Naive thymus-derived CD8-positive, alpha-beta T cell (primary cell): ENCODE measurements at regions of chr2 and their contacts with region 1.

Region 1: GRCh38 chr2:23926750-23927571 is at the start of gene ATAD2B:
- DNase-seq: peak; percentile 91 to 97 (median 94)
- ATAC-seq: peak; percentile 82
- H3K4me3 Mint-ChIP-seq: peak within 1 kb of the TSS; percentile 94 to 99 (median 98)
- H3K27ac Mint-ChIP-seq: peak within 1 kb of the TSS; percentile 93 to 100 (median 100)
- H3K4me1 Mint-ChIP-seq: peaks cover 24 to 59% (median 55%) of the 10 kb centered on the region in 4 donors
- H3K27me3 Mint-ChIP-seq: no peaks in the 10 kb centered on the region
- polyA plus RNA-seq, gene ATAD2B: 7.2 to 11.4 (median 7.5) TPM

Region 2: DNA sequence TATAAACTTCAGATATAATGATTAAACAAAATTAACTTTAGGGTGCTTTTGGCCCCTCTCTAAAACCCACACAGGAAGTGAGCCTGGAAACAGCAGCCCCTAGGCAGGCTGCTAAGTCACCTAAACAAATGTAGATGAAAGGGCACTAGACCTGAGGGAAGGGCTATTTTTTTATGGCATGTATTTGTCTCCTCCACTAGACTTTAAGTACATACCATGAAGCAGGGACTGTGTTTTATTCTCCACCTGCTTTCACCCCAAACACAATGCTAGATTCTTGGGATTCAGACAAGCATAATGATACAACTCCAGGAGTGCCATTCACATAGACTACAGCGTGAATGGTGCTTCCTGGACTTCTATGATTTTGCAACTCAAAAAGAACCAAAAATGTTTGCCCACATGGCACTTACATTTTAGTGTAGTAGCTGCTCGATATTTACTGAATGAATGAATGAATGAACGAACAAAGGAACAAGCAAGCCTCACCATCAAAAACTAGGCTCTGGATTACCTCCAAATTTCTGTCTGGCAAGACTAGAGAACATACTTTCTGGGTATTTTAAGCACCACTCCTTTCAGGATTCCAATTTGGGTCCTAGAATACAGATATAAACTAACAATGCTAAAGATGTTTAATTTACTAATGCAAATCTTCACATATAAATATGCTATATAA is 10.1 kb before region 1 on chr2:
- POLR2A ChIA-PET with region 1: interaction called, 16 read pairs
- DNase-seq: peak in 4 of 10 donors; percentile 6 to 32 (median 24)
- ATAC-seq: peak; percentile 80 to 88
- H3K4me3 Mint-ChIP-seq: peak overlapping the region in 9 of 10 donors; percentile 21 to 66 (median 59)
- H3K27ac Mint-ChIP-seq: peak overlapping the region in 9 of 10 donors; percentile 28 to 82 (median 57)
- H3K4me1 Mint-ChIP-seq: peaks cover 25 to 77% (median 63%) of the 10 kb centered on the region in 4 donors
- H3K27me3 Mint-ChIP-seq: no peaks in the 10 kb centered on the region

Region 3: GRCh38 chr2:23939987-23940717 is 13.2 kb after region 1 on chr2 and contains the start of gene UBXN2A:
- POLR2A ChIA-PET with region 1: interaction called, 108 read pairs
- DNase-seq: peak; percentile 62 to 81 (median 77)
- ATAC-seq: peak; percentile 84
- H3K4me3 Mint-ChIP-seq: peak within 1 kb of the TSS; percentile 79 to 97 (median 94)
- H3K27ac Mint-ChIP-seq: peak within 1 kb of the TSS; percentile 73 to 95 (median 93)
- H3K4me1 Mint-ChIP-seq: peaks cover 19 to 39% (median 30%) of the 10 kb centered on the region in 4 donors
- H3K27me3 Mint-ChIP-seq: peaks cover 0 to 6% (median 0%) of the 10 kb centered on the region in 5 donors
- polyA plus RNA-seq, gene UBXN2A: 13.1 to 13.6 (median 13.6) TPM

Region 4: DNA sequence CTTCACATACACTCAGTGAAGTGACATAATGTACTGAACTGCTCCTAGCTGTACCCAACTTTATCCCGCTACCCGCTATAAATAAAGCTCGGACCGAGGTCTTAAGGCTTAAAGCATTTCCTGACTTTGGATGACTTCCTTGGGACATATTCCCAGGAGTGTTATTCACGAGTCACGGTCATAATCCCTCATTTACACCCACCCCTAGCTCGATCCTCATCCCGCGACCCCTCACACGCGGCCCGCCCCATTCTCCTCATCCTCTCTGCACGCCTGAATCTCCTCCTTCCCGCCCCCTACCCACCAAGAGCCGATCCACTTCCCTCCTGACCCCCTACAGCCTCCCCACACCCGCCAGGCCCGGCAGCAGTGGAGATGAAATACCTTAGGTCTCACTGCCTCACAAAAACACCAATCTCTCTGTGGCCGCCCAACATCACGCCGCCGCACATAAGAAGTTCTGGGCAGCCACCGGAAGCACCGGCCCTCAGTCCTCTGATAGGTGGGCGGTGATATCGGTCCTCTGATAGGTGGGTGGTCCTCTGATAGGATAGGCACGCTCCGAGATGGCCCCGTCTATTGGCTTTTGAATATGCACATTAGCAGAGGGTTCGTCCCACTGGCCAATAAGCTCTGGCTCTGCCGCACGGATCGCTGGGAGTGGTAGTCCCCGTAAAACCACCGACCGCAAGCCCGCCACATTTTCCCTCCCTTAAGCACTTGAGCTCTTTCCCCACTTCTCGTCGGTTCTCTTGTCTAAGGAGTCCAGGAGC is 120.2 kb after region 1 on chr2 and contains the start of gene WDCP:
- POLR2A ChIA-PET with region 1: interaction called, 16 read pairs
- DNase-seq: peak; percentile 79 to 97 (median 92)
- ATAC-seq: peak; percentile 98 to 100
- H3K4me3 Mint-ChIP-seq: peak within 1 kb of the TSS; percentile 93 to 99 (median 96)
- H3K27ac Mint-ChIP-seq: peak within 1 kb of the TSS; percentile 83 to 96 (median 94)
- H3K4me1 Mint-ChIP-seq: peaks cover 12 to 35% (median 30%) of the 10 kb centered on the region in 4 donors
- H3K27me3 Mint-ChIP-seq: peaks cover 0 to 5% (median 1%) of the 10 kb centered on the region in 5 donors
- polyA plus RNA-seq, gene WDCP: 3.4 to 6.5 (median 5.0) TPM

Region 5: DNA sequence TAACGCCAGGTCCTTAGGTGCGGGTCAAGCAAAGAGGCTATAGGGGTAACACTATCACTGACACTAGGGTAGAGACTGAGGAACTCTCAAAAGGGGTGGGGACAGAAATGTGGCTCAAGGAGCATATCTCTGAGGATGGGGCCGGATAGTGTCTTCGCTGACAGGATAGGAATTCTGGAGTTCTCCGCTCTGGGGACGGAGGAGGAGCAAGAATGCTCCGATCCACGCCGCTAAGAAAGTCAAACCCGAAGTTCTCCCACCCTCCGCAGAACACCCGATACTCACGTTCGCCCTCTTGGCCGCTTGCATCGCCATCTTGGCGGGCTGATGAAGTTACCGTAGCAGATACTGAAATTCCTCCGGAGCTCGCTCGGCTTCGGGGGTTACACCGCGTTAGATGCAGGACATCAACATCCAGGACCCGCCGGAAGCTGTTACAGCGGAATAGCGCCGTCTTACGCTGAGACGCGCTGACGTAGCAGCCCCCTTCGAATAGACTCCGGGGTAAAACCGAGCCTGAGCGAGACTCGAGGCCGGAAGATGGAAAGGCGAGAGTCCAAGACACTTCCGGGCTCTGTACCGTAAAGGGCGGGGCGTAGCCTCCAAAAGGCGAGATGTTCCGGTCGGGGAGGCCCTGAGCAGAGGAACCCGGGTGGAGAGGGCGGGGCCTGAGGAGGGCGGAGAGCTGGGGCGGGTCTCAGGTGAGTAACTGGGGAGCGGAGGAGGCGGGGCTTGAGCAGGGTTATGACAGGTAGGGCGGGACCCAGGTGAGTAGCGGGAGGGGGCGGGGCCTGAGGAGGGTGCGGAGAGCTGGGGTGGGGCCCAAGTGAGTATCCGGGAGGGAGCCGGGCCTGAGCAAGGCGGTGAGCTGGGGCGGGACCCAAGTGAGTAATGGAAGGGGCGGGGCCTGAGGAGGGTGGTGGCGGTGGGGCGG is 149.2 kb after region 1 on chr2 and contains the start of gene SF3B6:
- POLR2A ChIA-PET with region 1: interaction called, 98 read pairs
- DNase-seq: peak; percentile 97 to 100 (median 100)
- ATAC-seq: peak; percentile 81 to 82
- H3K4me3 Mint-ChIP-seq: peak within 1 kb of the TSS; percentile 96 to 100 (median 99)
- H3K27ac Mint-ChIP-seq: peak within 1 kb of the TSS; percentile 94 to 100 (median 99)
- H3K4me1 Mint-ChIP-seq: peaks cover 13 to 40% (median 35%) of the 10 kb centered on the region in 4 donors
- H3K27me3 Mint-ChIP-seq: no peaks in the 10 kb centered on the region
- polyA plus RNA-seq, gene SF3B6: 161 to 208 (median 195) TPM

Region 6: DNA sequence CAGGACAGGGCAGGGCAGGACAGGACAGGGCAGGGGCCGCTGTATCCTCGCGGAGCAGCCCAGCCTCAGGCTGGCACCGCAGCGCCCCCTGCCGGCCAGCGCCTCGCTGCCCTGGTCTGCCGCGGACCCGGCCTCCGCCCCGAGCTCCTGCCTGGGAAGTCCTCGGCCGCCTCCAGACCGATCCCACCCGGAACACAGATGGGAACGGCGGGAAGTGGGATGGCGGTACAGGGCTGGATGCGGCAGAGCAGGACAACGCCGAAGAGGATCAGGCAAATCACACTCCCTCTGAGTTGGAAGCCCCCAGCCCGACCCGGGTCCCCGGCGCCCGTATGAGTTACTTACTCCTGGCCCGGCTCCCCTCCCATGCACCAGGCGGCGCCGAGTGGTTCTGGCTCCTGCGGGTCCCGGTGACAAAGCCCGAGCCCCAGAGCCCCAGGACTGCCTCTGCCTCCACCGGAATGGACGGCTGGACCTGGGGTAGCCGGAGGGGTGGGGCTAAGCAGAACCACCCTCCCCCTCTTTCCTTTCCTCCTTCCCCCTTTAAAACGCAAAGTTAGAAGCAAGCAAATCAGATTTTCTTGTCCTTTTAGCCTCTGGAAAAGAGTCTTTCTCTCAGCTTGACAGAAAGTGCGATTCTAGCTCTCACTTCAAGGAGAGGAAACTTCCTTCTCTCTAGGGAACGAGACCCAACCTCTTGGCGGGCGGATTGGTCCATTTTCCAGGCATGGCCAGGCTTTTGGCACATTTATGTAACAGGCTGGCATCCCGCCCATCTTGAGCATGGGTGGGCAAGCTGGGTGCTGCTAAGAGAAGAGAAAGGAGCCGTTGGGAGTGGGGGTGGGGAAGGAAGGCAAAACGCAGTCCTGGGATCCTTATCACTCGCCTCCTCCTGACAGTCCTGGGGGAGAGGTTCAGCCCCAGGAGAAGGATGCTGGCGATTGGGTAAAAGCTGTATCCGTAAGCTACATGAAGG is 157.7 kb after region 1 on chr2 and contains the start of gene TP53I3:
- POLR2A ChIA-PET with region 1: interaction called, 98 read pairs
- DNase-seq: peak; percentile 56 to 91 (median 81)
- ATAC-seq: peak; percentile 92 to 95
- H3K4me3 Mint-ChIP-seq: peak within 1 kb of the TSS; percentile 79 to 92 (median 88)
- H3K27ac Mint-ChIP-seq: peak within 1 kb of the TSS; percentile 25 to 84 (median 54)
- H3K4me1 Mint-ChIP-seq: peaks cover 7 to 18% (median 16%) of the 10 kb centered on the region in 4 donors
- H3K27me3 Mint-ChIP-seq: peaks cover 0 to 3% (median 0%) of the 10 kb centered on the region in 5 donors
- polyA plus RNA-seq, gene TP53I3: 0.39 to 0.44 TPM in 2 of 3 donors, not detected in the other

Region 7: DNA sequence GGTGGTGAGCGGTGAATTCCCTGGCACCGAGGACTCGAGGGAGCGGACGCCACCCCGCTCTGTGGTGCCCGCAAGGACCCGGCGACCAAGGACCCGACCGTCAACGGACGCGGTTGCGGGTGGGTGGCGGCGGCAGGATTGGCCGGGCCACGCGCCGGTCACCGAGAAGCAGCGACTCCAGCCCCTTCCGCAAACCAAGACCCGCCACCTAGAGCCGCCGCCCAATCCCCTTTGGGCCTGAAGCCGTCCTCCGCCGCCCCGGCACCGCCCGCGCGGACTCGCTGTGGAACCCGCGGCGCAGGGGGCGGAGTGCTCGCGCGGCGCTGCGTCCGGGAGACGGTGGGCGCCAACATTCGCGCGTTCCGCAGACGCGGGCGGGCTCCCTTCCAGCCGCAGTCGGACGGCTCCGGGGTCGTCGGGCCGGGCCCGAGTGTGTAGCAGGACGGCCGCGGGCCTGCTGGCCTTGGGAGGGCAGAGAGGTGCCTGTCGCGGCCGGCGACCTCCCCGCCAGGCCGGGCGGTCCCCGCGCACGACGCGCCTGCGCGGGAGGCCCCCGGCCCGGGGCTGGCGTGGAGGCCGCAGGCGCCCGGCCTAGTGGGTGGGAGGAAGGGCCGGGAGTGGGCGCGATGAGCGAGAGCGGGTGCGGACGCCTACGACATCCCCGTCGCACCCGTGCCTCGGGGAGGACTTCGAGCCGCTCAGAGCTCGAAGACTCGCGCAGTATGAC is 196.4 kb after region 1 on chr2 and contains the starts of genes FAM228B and PFN4:
- POLR2A ChIA-PET with region 1: interaction called, 10 read pairs
- DNase-seq: peak; percentile 28 to 73 (median 52)
- ATAC-seq: peak; percentile 90 to 93
- H3K4me3 Mint-ChIP-seq: peak within 1 kb of the TSS; percentile 78 to 91 (median 87)
- H3K27ac Mint-ChIP-seq: peak within 1 kb of the TSS; percentile 61 to 93 (median 88)
- H3K4me1 Mint-ChIP-seq: peaks cover 8 to 22% (median 14%) of the 10 kb centered on the region in 4 donors
- H3K27me3 Mint-ChIP-seq: no peaks in the 10 kb centered on the region
- polyA plus RNA-seq, gene FAM228B: 6.5 to 8.7 (median 7.5) TPM
- polyA plus RNA-seq, gene PFN4: not detected